OCI-LY7 (cell line): ENCODE measurements at regions of chr3 and their contacts with region 1.

Region 1: DNA sequence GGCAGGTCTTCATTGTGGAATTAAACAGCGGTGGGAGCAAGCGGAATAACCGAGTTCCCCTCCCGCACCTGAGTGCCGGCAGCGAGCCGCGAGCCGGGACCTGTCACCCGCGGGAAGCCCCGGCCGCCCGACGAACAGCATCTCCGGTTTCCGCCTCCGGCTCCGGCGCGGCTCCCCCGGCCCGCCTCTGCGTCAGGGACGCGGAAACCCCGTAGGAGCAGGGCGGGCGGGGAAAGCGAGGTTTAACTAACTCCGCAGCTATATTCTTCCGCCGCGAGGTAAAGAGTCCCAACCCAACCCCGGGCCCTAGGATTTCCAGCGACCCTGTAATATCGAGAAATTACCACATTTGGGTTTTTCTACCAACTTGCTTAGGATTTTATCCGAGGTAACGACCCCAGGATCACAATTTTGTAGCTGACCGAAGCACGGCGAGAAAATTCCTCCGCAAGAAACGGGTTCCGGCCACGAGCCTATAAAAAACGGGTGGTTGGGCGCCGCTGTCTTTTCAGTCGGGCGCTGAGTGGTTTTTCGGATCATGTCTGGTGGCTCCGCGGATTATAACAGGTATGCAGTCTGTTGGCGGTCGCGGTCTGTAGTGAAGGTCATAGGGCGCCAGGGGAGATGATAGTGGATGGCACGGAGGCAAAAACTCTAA is at the start of gene EIF4A2:
- DNase-seq: peak; percentile 95
- H3K4me3 ChIP-seq: peak within 1 kb of the TSS; percentile 98
- H3K27ac ChIP-seq: peak within 1 kb of the TSS; percentile 99
- H3K4me1 ChIP-seq: peaks cover 43% of the 10 kb centered on the region
- CTCF ChIP-seq: no peak
- total RNA-seq, gene EIF4A2: 506 and 596 TPM in 2 replicates

Region 2: GRCh38 chr3:185937689-185938463 is 845.3 kb before region 1 on chr3 and contains the start of gene TRA2B:
- CTCF ChIA-PET with region 1: no interaction called
- POLR2A ChIA-PET with region 1: interaction called, 4 read pairs
- intact Hi-C with region 1: loop called (anchors 2 kb)
- DNase-seq: peak; percentile 98
- H3K4me3 ChIP-seq: peak within 1 kb of the TSS; percentile 92
- H3K27ac ChIP-seq: peak within 1 kb of the TSS; percentile 88
- H3K4me1 ChIP-seq: peaks cover 22% of the 10 kb centered on the region
- CTCF ChIP-seq: peak; percentile 62
- total RNA-seq, gene TRA2B: 349 and 420 TPM in 2 replicates

Region 3: DNA sequence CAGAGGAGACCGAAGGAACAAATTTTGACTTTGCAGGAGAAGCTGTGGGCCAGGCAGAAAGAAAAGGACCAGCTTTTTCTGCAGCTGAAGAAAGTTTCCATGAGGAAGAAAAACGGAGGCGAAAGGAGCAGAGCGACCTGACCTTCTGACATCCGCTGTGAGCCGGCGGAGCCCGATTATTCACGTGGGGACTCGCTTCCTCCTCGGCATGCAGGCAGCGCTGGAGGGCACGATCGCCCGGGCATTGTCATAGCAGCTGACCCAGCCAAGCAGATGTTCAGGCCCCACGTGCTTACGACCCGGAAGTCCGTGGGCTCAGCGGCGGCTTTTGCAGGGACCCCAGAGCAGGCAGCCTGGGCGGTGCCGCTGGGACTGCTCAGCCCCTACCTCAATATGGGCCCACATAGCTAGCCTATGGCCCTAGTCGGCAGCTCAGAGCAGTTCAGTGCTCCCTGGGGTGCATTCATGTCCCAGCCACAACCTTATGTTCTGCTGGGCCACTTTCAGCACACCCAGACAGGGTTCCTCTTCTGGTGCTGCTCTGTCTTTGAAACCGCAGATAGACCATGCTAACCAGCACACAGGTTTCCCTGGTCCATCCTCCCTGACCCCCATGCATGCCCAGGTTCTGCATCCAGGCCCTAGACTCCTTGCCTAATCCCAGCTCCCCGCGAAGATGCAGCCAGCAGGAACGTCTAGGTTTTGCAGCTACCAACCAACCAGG is 10.3 kb before region 1 on chr3:
- CTCF ChIA-PET with region 1: no interaction called
- POLR2A ChIA-PET with region 1: interaction called, 47 read pairs
- intact Hi-C with region 1: no loop called
- DNase-seq: peak; percentile 91
- H3K4me3 ChIP-seq: peak overlapping the region; percentile 65
- H3K27ac ChIP-seq: peak overlapping the region; percentile 52
- H3K4me1 ChIP-seq: peaks cover 30% of the 10 kb centered on the region
- CTCF ChIP-seq: no peak

Region 4: DNA sequence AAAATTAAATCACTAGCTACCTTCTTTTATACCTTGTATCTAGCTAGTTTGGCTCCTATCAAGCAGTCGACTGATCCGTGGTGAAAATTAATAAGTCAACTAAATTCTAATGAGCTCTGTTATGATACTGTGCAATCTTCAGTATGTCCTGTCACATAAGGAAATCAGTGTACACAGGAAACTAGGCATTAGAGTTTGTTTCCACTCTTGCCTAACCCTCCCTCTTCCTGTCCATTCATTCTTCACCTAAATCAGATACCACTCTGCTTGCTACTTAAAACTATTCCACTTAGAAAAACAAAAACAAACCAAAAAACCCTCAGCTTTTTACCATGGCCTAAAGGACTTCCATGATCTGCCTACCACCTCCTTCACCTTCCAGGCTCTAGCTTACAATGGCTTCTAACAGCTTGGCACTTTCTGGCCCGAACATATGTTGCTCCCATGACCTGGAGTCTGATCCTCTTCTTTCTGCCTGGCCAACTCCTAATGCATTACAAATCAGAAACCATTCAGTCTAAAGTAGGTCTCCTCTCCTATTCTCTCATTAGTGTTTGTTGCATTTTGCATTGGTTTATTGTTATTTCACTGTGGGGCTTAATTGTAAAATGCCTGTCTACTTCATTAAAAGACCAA is 15.2 kb after region 1 on chr3:
- CTCF ChIA-PET with region 1: interaction called, 4 read pairs
- POLR2A ChIA-PET with region 1: interaction called, 27 read pairs
- intact Hi-C with region 1: no loop called
- DNase-seq: no peak
- H3K4me3 ChIP-seq: no peak overlapping the region
- H3K27ac ChIP-seq: no peak overlapping the region
- H3K4me1 ChIP-seq: peaks cover 4% of the 10 kb centered on the region
- CTCF ChIP-seq: no peak

Region 5: DNA sequence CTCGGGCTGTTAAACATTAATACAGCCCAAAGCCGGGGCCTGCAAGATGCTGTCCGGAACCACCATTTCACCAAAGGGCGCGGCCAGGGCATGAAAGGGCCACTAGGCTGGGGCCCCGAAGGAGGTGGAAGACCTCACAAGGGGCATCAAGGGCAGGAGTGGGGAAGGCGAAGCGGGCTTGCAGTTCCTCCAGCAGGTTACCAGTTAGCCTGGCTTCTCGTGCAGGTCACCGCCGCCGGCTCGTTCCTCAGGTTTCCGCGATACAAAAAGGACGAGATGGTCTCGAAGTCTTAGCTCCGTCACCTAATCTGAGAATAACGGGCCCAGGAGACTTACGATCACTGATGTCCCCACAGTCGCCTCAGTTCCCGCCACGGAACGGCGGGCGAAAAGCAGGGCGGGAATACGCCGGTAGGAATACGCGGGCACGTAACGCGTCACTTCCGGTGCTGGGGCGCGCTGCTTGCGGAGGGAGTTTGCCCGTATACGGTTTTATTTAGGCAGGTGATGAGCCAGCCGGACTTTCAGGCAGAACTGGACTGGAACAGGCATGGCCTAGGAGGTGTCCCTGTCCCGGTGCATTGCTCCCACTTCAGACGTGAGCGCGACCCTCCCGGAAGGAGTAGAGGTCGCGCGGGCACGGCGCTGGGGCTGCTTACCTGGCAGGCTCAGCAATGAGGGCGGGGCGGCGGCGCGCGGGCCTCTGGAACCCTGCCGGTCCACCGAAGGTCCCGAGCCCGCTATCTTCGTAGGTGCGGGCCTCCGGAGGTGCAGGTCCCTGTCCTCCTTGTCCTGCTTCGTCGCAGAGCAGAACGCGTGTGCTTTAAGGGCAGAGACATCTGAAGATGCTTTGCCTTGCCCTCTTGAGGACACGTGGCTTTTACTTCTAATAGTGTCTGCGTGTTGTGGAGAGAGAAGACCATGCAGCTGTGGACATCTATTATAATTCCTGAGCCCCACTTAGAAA is 23.2 kb after region 1 on chr3 and contains the start of gene RFC4:
- CTCF ChIA-PET with region 1: no interaction called
- POLR2A ChIA-PET with region 1: interaction called, 31 read pairs
- intact Hi-C with region 1: loop called (anchors 2 kb)
- DNase-seq: peak; percentile 90
- H3K4me3 ChIP-seq: peak within 1 kb of the TSS; percentile 86
- H3K27ac ChIP-seq: peak within 1 kb of the TSS; percentile 78
- H3K4me1 ChIP-seq: peaks cover 20% of the 10 kb centered on the region
- CTCF ChIP-seq: no peak
- total RNA-seq, gene RFC4: 114 and 137 TPM in 2 replicates